Right ventricle myocardium inferior (tissue), 1 donor: ENCODE measurements at regions of chr11 and their contacts with region 1.

Region 1: GRCh38 chr11:114762408-114762807 is 84.1 kb downstream of the NXPE2 start:
- DNase-seq: no peak
- ATAC-seq: peak; percentile 81

Region 2: GRCh38 chr11:113994077-113994954 is 768.1 kb before region 1 on chr11:
- intact Hi-C with region 1: loop called (anchors 10 kb)
- DNase-seq: no peak
- ATAC-seq: peak; percentile 40